ENCODE measurements at regions of chr12 and their contacts with region 1.

Region 1: DNA sequence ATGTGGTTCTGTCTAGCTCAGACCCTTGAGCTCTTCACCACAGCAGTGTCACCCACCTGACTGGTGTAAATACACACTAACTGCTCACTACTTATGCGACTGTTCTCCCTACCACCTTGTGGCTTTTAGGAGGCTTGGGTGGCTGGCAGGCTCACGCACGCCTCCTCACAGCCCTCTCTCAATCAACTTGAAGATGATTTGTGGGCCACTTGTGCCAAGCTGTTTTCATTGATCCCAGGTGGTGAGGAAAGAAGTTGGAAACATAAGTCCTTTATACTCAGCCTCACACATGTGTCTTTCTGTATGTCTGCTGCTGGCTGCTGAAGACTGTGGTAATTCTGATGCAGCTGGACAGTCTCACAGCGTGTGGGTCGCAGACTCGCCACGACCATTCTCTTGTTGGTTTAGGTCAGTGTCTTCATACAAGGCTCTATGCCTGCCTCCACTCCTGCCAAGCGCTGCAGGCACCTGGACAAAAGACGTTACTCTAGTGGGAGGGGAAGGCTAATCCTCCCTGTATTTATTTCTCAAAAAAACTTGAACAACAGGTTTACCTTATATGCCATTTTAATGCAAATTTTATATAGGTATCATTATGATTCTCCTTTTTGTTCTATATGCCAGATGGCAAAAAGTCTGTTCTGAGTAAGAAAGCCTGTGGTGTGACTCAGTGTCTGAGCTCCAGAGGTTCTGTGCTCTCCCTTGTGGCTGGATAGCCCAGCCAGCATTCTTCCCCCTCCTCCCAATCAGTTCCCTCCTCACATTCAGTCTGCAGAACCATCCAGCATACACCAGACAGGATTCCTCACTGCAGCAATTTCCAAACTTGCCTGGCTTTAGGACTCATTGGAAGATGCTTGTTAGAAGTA is 115.6 kb downstream of the DIP2B start:
- DNase-seq: peak; percentile 50 to 54
- H3K4me3 ChIP-seq: no peak overlapping the region
- H3K4me3 Mint-ChIP-seq: peak overlapping the region; percentile 11
- H3K27ac Mint-ChIP-seq: peak overlapping the region; percentile 94
- H3K4me1 ChIP-seq: peaks cover 67% of the 10 kb centered on the region
- H3K4me1 Mint-ChIP-seq: peaks cover 60% of the 10 kb centered on the region
- H3K27me3 ChIP-seq: no peaks in the 10 kb centered on the region
- H3K27me3 Mint-ChIP-seq: no peaks in the 10 kb centered on the region
- CTCF ChIP-seq: no peak

Region 2: GRCh38 chr12:50533203-50533584 is 87.1 kb before region 1 on chr12:
- CTCF ChIA-PET with region 1: no interaction called
- POLR2A ChIA-PET with region 1: no interaction called
- intact Hi-C with region 1: no loop called
- DNase-seq: no peak
- H3K4me3 ChIP-seq: no peak overlapping the region
- H3K4me3 Mint-ChIP-seq: no peak overlapping the region
- H3K27ac Mint-ChIP-seq: no peak overlapping the region
- H3K4me1 ChIP-seq: peaks cover 54% of the 10 kb centered on the region
- H3K4me1 Mint-ChIP-seq: peaks cover 22% of the 10 kb centered on the region
- H3K27me3 ChIP-seq: no peaks in the 10 kb centered on the region
- H3K27me3 Mint-ChIP-seq: no peaks in the 10 kb centered on the region
- CTCF ChIP-seq: no peak

Region 3: DNA sequence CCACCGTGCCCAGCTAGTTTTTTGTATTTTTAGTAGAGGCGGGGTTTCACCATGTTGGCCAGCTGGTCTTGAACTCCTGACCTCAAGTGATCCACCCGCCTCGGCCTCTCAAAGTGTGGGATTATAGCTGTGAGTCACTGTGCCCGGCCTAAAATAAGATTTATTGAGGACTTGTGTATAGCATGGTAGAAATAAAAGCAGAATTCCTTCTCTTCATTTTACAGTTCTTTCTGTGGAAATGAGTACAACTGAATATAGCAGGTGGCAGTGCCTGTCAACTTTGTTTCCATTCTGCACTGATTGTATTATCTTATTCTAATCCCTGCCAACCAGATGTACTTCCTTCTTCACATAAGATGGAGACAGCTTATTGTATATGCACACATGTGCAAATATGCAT is 74.6 kb before region 1 on chr12:
- CTCF ChIA-PET with region 1: no interaction called
- POLR2A ChIA-PET with region 1: no interaction called
- intact Hi-C with region 1: loop called (anchors 1 kb)
- DNase-seq: no peak
- H3K4me3 ChIP-seq: no peak overlapping the region
- H3K4me3 Mint-ChIP-seq: no peak overlapping the region
- H3K27ac Mint-ChIP-seq: peak overlapping the region; percentile 66
- H3K4me1 ChIP-seq: peaks cover 54% of the 10 kb centered on the region
- H3K4me1 Mint-ChIP-seq: peaks cover 22% of the 10 kb centered on the region
- H3K27me3 ChIP-seq: no peaks in the 10 kb centered on the region
- H3K27me3 Mint-ChIP-seq: no peaks in the 10 kb centered on the region
- CTCF ChIP-seq: no peak

Region 4: DNA sequence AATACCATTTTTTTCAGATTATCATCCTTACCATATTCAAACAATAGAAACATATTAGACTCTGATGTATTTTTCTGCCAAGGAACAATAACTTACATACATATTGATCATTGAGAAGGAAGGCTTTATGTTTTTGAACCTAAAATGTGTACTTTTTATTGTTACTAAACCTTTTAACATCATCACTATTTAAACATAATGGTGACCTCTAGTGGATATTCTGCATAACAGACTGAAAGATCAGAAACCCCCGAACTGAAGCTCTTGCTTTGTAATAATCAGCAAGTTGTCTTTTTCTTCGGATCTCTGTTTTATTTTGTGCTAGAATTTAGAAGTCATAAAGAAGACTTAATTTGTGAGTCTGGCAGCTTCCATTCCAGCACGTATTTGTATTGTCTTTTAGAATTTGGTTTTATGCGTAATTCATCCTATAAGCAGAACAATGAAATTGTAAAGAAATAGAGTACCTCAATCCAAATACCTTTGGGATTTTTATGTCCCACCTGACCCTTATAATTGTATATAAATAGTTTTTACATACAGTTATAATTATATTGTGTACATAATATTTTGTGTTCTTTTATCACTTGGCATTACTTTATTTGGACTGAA is 17.6 kb after region 1 on chr12:
- CTCF ChIA-PET with region 1: interaction called, 7 read pairs
- POLR2A ChIA-PET with region 1: no interaction called
- intact Hi-C with region 1: loop called (anchors 1 kb)
- DNase-seq: peak in 1 of 2 experiments; percentile 37
- H3K4me3 ChIP-seq: no peak overlapping the region
- H3K4me3 Mint-ChIP-seq: no peak overlapping the region
- H3K27ac Mint-ChIP-seq: peak overlapping the region; percentile 74
- H3K4me1 ChIP-seq: peaks cover 51% of the 10 kb centered on the region
- H3K4me1 Mint-ChIP-seq: peaks cover 57% of the 10 kb centered on the region
- H3K27me3 ChIP-seq: no peaks in the 10 kb centered on the region
- H3K27me3 Mint-ChIP-seq: no peaks in the 10 kb centered on the region
- CTCF ChIP-seq: peak; percentile 73 to 83

Region 5: DNA sequence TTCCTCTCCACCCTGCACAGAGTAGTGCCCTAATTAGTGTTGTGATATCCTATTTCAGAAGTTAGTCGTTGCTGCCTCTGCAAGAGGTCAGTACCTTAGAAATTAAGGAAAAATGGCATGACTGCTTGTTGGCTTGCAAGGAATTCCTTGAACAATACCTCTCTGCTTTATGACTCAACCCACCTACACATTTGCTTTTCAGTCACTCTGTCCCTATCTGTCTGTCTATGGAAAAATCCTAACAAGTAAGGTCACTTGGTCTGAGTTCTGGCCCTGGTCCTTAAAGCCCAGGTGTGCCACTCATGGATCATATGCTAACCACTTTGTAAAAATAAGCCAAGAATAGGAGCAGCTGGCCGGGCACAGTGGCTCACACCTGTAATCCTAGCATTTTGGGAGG is 27.1 kb after region 1 on chr12:
- CTCF ChIA-PET with region 1: no interaction called
- POLR2A ChIA-PET with region 1: no interaction called
- intact Hi-C with region 1: loop called (anchors 1 kb)
- DNase-seq: no peak
- H3K4me3 ChIP-seq: no peak overlapping the region
- H3K4me3 Mint-ChIP-seq: no peak overlapping the region
- H3K27ac Mint-ChIP-seq: peak overlapping the region; percentile 56
- H3K4me1 ChIP-seq: peaks cover 11% of the 10 kb centered on the region
- H3K4me1 Mint-ChIP-seq: peaks cover 28% of the 10 kb centered on the region
- H3K27me3 ChIP-seq: no peaks in the 10 kb centered on the region
- H3K27me3 Mint-ChIP-seq: no peaks in the 10 kb centered on the region
- CTCF ChIP-seq: no peak

Measured in Caco-2 (cell line).